ENCODE measurements at regions of chr2 and their contacts with region 1.

Region 1: GRCh38 chr2:237085248-237086221 is at the start of gene COPS8:
- DNase-seq: peak; percentile 96
- ATAC-seq: peak; percentile 100
- H3K4me3 Mint-ChIP-seq: peak within 1 kb of the TSS; percentile 82
- H3K27ac Mint-ChIP-seq: peak within 1 kb of the TSS; percentile 91
- H3K4me1 Mint-ChIP-seq: peaks cover 12% of the 10 kb centered on the region
- H3K27me3 Mint-ChIP-seq: no peaks in the 10 kb centered on the region
- total RNA-seq, gene COPS8: 65.8 to 74.5 TPM

Region 2: GRCh38 chr2:236550701-236551465 is 534.7 kb before region 1 on chr2:
- CTCF ChIA-PET with region 1: no interaction called
- POLR2A ChIA-PET with region 1: no interaction called
- intact Hi-C with region 1: loop called in 1 of 2 experiments (anchors 5 kb)
- DNase-seq: peak; percentile 69
- ATAC-seq: peak; percentile 17
- H3K4me3 Mint-ChIP-seq: no peak overlapping the region
- H3K27ac Mint-ChIP-seq: no peak overlapping the region
- H3K4me1 Mint-ChIP-seq: peaks cover 97% of the 10 kb centered on the region
- H3K27me3 Mint-ChIP-seq: no peaks in the 10 kb centered on the region

Region 3: GRCh38 chr2:237060534-237061312 is 24.8 kb before region 1 on chr2:
- CTCF ChIA-PET with region 1: interaction called, 3 read pairs
- POLR2A ChIA-PET with region 1: no interaction called
- intact Hi-C with region 1: loop called in 1 of 2 experiments (anchors 2 kb)
- DNase-seq: peak; percentile 42
- ATAC-seq: no peak
- H3K4me3 Mint-ChIP-seq: no peak overlapping the region
- H3K27ac Mint-ChIP-seq: no peak overlapping the region
- H3K4me1 Mint-ChIP-seq: peaks cover 16% of the 10 kb centered on the region
- H3K27me3 Mint-ChIP-seq: no peaks in the 10 kb centered on the region

Region 4: GRCh38 chr2:237072067-237072931 is 13.2 kb before region 1 on chr2:
- CTCF ChIA-PET with region 1: interaction called, 12 read pairs
- POLR2A ChIA-PET with region 1: no interaction called
- intact Hi-C with region 1: no loop called
- DNase-seq: peak; percentile 82
- ATAC-seq: peak; percentile 39
- H3K4me3 Mint-ChIP-seq: no peak overlapping the region
- H3K27ac Mint-ChIP-seq: no peak overlapping the region
- H3K4me1 Mint-ChIP-seq: no peaks in the 10 kb centered on the region
- H3K27me3 Mint-ChIP-seq: no peaks in the 10 kb centered on the region

Region 5: GRCh38 chr2:237235383-237236095 is 150.0 kb after region 1 on chr2:
- CTCF ChIA-PET with region 1: no interaction called
- POLR2A ChIA-PET with region 1: no interaction called
- intact Hi-C with region 1: no loop called
- DNase-seq: no peak
- ATAC-seq: peak; percentile 65
- H3K4me3 Mint-ChIP-seq: no peak overlapping the region
- H3K27ac Mint-ChIP-seq: no peak overlapping the region
- H3K4me1 Mint-ChIP-seq: no peaks in the 10 kb centered on the region
- H3K27me3 Mint-ChIP-seq: peaks cover 18% of the 10 kb centered on the region

Region 6: DNA sequence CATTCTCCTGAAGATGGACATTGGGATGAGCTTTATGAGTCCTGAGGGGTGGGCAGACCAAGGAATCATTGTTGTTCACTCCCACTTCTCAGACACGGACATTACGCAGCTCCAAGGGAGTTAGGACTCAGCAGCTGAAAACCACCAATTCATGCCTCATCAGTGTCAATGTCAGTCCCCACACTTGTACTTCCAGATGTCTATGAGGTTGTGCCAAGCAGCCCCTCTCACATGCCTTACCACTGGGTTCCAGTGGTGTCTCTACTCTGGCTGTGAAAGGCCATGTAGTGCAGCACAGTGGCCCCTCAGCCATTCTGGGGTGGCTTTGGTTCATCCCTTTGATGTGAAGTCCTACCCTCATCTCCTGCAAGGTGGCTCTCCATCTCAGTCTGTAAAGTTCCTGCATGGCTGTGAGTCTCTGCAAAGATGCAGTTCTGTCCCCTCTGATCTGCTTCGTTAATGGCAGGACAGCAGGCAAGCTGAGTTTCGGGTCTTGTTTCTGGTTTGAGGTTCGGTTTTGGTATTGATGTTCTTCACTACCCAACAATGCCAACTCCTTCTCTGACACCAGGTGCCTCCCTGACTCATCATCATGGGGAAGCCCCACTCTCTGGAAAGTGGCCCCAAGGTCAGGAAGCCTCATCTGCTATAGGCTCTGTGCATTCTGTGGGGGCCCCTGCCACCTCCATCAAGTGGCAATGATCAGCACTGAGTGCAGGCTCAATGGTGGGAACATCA is 342.4 kb after region 1 on chr2:
- CTCF ChIA-PET with region 1: no interaction called
- POLR2A ChIA-PET with region 1: no interaction called
- intact Hi-C with region 1: loop called in 1 of 2 experiments (anchors 2 kb)
- DNase-seq: peak; percentile 92
- ATAC-seq: peak; percentile 79
- H3K4me3 Mint-ChIP-seq: peak overlapping the region; percentile 34
- H3K27ac Mint-ChIP-seq: peak overlapping the region; percentile 97
- H3K4me1 Mint-ChIP-seq: peaks cover 91% of the 10 kb centered on the region
- H3K27me3 Mint-ChIP-seq: peaks cover 2% of the 10 kb centered on the region

Region 7: GRCh38 chr2:237456200-237456843 is 370.8 kb after region 1 on chr2:
- CTCF ChIA-PET with region 1: no interaction called
- POLR2A ChIA-PET with region 1: no interaction called
- intact Hi-C with region 1: no loop called
- DNase-seq: no peak
- ATAC-seq: no peak
- H3K4me3 Mint-ChIP-seq: no peak overlapping the region
- H3K27ac Mint-ChIP-seq: no peak overlapping the region
- H3K4me1 Mint-ChIP-seq: peaks cover 28% of the 10 kb centered on the region
- H3K27me3 Mint-ChIP-seq: no peaks in the 10 kb centered on the region

Region 8: DNA sequence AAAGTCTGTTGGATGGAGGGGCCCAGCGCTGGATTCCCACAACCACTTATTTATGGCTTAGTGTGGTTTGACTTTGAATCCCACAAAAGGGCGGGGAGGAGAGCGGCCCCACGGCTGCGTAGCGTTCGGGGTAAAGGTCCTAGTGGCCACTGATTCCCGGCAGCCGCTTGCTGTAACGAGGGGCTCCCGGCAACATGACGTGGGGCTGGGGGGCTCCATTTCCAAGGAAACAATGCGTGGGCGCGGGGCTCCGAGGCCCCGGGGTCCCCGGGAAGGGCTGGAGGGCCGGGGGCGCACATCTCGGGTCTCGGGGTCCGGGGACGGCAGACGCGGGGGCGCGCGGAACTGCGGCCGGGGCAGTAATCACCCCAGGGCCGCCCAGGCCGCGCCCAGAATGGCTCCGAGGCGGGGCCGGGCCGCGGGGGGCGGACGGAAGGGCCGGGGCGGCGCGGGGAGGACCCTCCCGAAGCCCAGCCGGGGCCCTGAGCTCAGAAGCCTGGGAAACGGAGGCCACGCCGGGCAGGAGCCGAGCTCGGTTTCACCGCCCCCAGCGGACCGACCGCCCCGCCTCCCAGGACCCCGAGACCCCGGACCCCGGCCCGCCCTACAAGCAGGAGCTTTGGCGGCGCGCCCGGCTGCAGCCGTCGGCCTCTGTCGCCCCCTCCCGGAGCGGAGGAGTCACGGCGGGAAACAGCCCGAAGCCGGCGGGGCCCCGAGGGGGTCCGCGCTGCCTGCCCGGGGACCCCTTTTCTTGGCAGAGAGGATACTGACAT is 389.6 kb after region 1 on chr2:
- CTCF ChIA-PET with region 1: interaction called, 4 read pairs
- POLR2A ChIA-PET with region 1: no interaction called
- intact Hi-C with region 1: loop called in 1 of 2 experiments (anchors 5 kb)
- DNase-seq: peak; percentile 86
- ATAC-seq: peak; percentile 72
- H3K4me3 Mint-ChIP-seq: peak overlapping the region; percentile 73
- H3K27ac Mint-ChIP-seq: peak overlapping the region; percentile 89
- H3K4me1 Mint-ChIP-seq: peaks cover 21% of the 10 kb centered on the region
- H3K27me3 Mint-ChIP-seq: peaks cover 15% of the 10 kb centered on the region

Measured in activated CD4-positive, alpha-beta T cell treated with anti-CD3 and anti-CD28 coated beads for 36 hours (primary cell).